ENCODE measurements at regions of chr1 and their contacts with region 1.

Region 1: DNA sequence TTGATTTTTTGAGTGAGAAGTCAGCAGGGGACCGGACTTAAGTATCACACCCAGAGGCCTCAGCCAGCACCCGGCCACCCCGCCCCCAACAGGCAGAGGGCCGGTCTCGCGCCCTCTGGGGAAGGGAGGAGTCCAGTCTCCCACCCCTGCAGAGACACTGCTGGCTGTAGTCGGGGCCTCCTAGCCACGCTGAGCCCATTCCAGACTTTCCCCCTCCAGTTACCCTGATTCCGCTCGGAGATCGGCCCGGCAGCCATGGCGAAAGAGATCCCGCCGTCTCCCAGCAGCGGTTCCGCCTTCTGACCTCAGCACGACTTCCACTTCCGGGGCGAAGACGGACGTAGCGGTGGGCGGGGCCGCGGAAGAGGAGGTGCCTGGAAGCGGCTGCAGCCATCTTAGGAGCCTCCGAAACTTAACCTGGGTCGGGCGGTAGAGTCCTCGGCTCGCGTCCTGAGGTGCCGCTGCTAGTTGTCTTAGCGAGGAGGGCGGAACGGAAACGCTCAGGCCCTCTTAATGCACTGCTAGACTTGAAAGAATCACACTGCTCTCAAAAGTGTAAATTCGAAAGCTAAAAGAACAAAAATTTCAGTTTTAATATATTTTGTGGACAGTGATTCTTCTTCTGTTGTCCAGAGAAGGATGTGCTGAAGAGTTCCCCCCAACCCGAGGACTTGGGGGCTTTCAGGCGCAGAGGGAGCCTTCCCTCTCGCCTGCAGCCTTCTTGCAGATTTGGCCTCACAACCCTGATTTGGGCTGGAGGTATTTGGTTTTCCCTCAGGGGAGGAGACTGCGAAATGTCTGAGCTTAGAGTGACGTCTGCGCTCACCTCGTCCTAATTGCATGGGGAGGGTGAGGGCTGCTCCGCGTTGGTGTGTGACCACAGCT is at the start of gene SF3B4:
- DNase-seq: peak; percentile 97
- H3K4me3 ChIP-seq: peak within 1 kb of the TSS; percentile 82 to 98 (median 86)
- H3K27ac ChIP-seq: peak within 1 kb of the TSS; percentile 94 to 96 (median 96)
- H3K4me1 ChIP-seq: peaks cover 20 to 74% (median 44%) of the 10 kb centered on the region in 4 donors
- H3K27me3 ChIP-seq: no peaks in the 10 kb centered on the region
- CTCF ChIP-seq: no peak
- EP300 ChIP-seq: no peak
- POLR2A ChIP-seq: peak; percentile 94
- total RNA-seq, gene SF3B4: 32.4 to 78.6 (median 46.2) TPM

Region 2: GRCh38 chr1:149886396-149887195 is 41.1 kb before region 1 on chr1:
- in situ Hi-C with region 1: no loop called
- intact Hi-C with region 1: loop called (anchors 5 kb)
- DNase-seq: peak; percentile 88
- H3K4me3 ChIP-seq: peak overlapping the region; percentile 61 to 81 (median 66)
- H3K27ac ChIP-seq: peak overlapping the region; percentile 97 to 100 (median 98)
- H3K4me1 ChIP-seq: peaks cover 0 to 25% (median 13%) of the 10 kb centered on the region in 4 donors
- H3K27me3 ChIP-seq: no peaks in the 10 kb centered on the region
- CTCF ChIP-seq: peak in 2 of 5 experiments; percentile 17 to 25
- EP300 ChIP-seq: peak; percentile 52
- POLR2A ChIP-seq: peak; percentile 100